ENCODE measurements at regions of chr4 and their contacts with region 1.

Region 1: GRCh38 chr4:26319467-26319948 is 1.3 kb upstream of the RBPJ start:
- DNase-seq: peak; percentile 97 to 99 (median 98)
- H3K4me3 ChIP-seq: peak overlapping the region; percentile 78 to 96 (median 81)
- H3K4me3 Mint-ChIP-seq: peak overlapping the region; percentile 92 to 96
- H3K27ac ChIP-seq: peak overlapping the region; percentile 98 to 99
- H3K27ac Mint-ChIP-seq: peak overlapping the region; percentile 97 to 99 (median 99)
- H3K4me1 ChIP-seq: peaks cover 39 to 44% of the 10 kb centered on the region in 2 donors
- H3K4me1 Mint-ChIP-seq: peaks cover 35% of the 10 kb centered on the region
- H3K27me3 ChIP-seq: no peaks in the 10 kb centered on the region
- H3K27me3 Mint-ChIP-seq: peaks cover 0 to 4% (median 3%) of the 10 kb centered on the region in 3 donors
- CTCF ChIP-seq: no peak

Region 2: DNA sequence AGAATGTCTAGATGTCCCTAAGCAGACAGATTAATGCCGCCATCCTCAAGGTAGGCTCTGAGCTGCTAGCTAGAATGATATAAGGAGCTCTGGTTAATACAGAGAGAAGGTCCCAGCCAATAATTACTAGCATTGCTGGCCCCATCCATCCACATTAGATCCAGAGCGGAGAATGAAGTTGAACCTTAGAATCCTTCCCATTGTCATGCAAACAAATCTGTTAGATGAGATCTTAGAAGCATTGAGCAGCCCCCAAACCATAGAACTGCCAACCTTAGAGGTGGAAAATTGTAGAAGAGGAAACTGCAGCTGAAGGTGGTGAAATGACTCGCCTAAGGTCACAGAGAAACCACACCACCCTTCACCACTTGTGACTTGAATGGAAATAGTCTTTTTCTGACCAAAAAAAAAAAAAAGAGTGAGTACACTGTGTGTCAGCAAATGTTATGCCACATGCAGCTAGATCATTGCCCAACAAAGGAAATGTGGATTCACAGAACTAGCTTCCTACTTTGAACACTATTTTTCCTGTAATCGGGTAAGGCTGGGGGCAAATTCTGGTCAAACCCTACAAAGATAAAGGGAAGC is 243.4 kb before region 1 on chr4:
- intact Hi-C with region 1: loop called (anchors 1 to 10 kb)
- DNase-seq: peak; percentile 92 to 97 (median 95)
- H3K4me3 ChIP-seq: peak overlapping the region in 1 of 3 experiments; percentile 15
- H3K4me3 Mint-ChIP-seq: peak overlapping the region; percentile 6 to 56
- H3K27ac ChIP-seq: peak overlapping the region; percentile 71 to 95
- H3K27ac Mint-ChIP-seq: peak overlapping the region; percentile 98 to 99 (median 98)
- H3K4me1 ChIP-seq: peaks cover 56% of the 10 kb centered on the region in 2 donors
- H3K4me1 Mint-ChIP-seq: peaks cover 65% of the 10 kb centered on the region
- H3K27me3 ChIP-seq: peaks cover 0 to 6% of the 10 kb centered on the region in 2 donors
- H3K27me3 Mint-ChIP-seq: peaks cover 5 to 22% (median 7%) of the 10 kb centered on the region in 3 donors
- CTCF ChIP-seq: no peak

Region 3: DNA sequence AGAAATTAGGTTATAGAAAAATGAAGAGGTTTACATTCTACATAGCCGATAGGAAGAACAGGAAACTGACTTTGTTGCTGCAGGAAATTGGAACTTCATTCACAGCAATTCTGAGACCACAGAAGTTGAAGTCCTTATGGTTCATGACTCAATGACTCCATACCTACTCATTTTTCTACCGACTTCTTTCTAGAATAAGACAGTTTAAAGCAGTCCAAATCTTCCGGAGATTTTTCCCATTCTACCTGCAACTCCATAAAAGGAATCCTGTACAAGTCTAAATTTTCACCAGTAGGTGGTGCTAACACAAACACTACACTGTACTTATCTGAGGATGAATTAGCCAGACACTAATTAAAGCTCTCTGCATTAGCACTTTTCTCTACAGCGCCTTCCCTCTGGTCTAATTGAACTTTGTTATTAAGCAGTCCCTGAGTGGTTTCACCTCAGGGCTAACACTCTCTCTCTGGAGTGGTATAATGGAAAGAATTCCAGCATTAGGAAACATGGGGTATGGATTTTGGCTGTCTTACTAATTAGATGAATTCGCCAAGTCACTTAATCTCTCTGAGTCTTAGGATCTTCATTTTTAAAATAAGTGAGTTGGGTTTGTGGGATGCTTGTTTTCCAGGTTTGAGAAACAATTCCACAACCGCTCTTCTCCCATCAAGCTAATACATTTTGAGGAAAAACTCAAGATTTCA is 237.6 kb before region 1 on chr4:
- intact Hi-C with region 1: loop called in 1 of 2 experiments (anchors 10 kb)
- DNase-seq: peak in 2 of 3 donors; percentile 47 to 74
- H3K4me3 ChIP-seq: no peak overlapping the region
- H3K4me3 Mint-ChIP-seq: no peak overlapping the region
- H3K27ac ChIP-seq: no peak overlapping the region
- H3K27ac Mint-ChIP-seq: peak overlapping the region in 1 of 7 donors; percentile 31
- H3K4me1 ChIP-seq: peaks cover 32 to 34% of the 10 kb centered on the region in 2 donors
- H3K4me1 Mint-ChIP-seq: peaks cover 38% of the 10 kb centered on the region
- H3K27me3 ChIP-seq: peaks cover 5 to 6% of the 10 kb centered on the region in 2 donors
- H3K27me3 Mint-ChIP-seq: peaks cover 15 to 19% (median 19%) of the 10 kb centered on the region in 3 donors
- CTCF ChIP-seq: peak; percentile 83

Region 4: GRCh38 chr4:26217961-26218676 is 101.4 kb before region 1 on chr4:
- intact Hi-C with region 1: loop called (anchors 5 to 10 kb)
- DNase-seq: peak; percentile 93 to 95 (median 95)
- H3K4me3 ChIP-seq: peak overlapping the region in 1 of 3 experiments; percentile 48
- H3K4me3 Mint-ChIP-seq: peak overlapping the region; percentile 70 to 82
- H3K27ac ChIP-seq: peak overlapping the region; percentile 96 to 99
- H3K27ac Mint-ChIP-seq: peak overlapping the region; percentile 99 to 100 (median 99)
- H3K4me1 ChIP-seq: peaks cover 28 to 31% of the 10 kb centered on the region in 2 donors
- H3K4me1 Mint-ChIP-seq: peaks cover 47% of the 10 kb centered on the region
- H3K27me3 ChIP-seq: no peaks in the 10 kb centered on the region
- H3K27me3 Mint-ChIP-seq: peaks cover 3 to 13% (median 12%) of the 10 kb centered on the region in 3 donors
- CTCF ChIP-seq: no peak

Region 5: GRCh38 chr4:26273616-26273980 is 45.9 kb before region 1 on chr4:
- intact Hi-C with region 1: loop called in 1 of 2 experiments (anchors 5 kb)
- DNase-seq: peak in 2 of 3 donors; percentile 67 to 79
- H3K4me3 ChIP-seq: peak overlapping the region; percentile 25 to 71 (median 29)
- H3K4me3 Mint-ChIP-seq: peak overlapping the region; percentile 56 to 78
- H3K27ac ChIP-seq: peak overlapping the region; percentile 88 to 91
- H3K27ac Mint-ChIP-seq: peak overlapping the region; percentile 87 to 97 (median 95)
- H3K4me1 ChIP-seq: peaks cover 80 to 87% of the 10 kb centered on the region in 2 donors
- H3K4me1 Mint-ChIP-seq: peaks cover 71% of the 10 kb centered on the region
- H3K27me3 ChIP-seq: no peaks in the 10 kb centered on the region
- H3K27me3 Mint-ChIP-seq: peaks cover 0 to 3% (median 2%) of the 10 kb centered on the region in 3 donors
- CTCF ChIP-seq: no peak

Region 6: GRCh38 chr4:26288355-26288909 is 31.1 kb before region 1 on chr4:
- intact Hi-C with region 1: loop called (anchors 1 to 2 kb)
- DNase-seq: peak; percentile 93 to 97 (median 97)
- H3K4me3 ChIP-seq: peak overlapping the region; percentile 8 to 43 (median 36)
- H3K4me3 Mint-ChIP-seq: peak overlapping the region; percentile 42 to 76
- H3K27ac ChIP-seq: peak overlapping the region; percentile 99
- H3K27ac Mint-ChIP-seq: peak overlapping the region; percentile 98 to 100 (median 99)
- H3K4me1 ChIP-seq: peaks cover 41 to 45% of the 10 kb centered on the region in 2 donors
- H3K4me1 Mint-ChIP-seq: peaks cover 30% of the 10 kb centered on the region
- H3K27me3 ChIP-seq: no peaks in the 10 kb centered on the region
- H3K27me3 Mint-ChIP-seq: peaks cover 0 to 2% (median 0%) of the 10 kb centered on the region in 3 donors
- CTCF ChIP-seq: no peak

Region 7: GRCh38 chr4:26410385-26411293 is 91.1 kb after region 1 on chr4:
- intact Hi-C with region 1: no loop called
- DNase-seq: peak; percentile 25 to 62 (median 31)
- H3K4me3 ChIP-seq: no peak overlapping the region
- H3K4me3 Mint-ChIP-seq: no peak overlapping the region
- H3K27ac ChIP-seq: no peak overlapping the region
- H3K27ac Mint-ChIP-seq: peak overlapping the region in 1 of 7 donors; percentile 76
- H3K4me1 ChIP-seq: peaks cover 4 to 12% of the 10 kb centered on the region in 2 donors
- H3K4me1 Mint-ChIP-seq: peaks cover 7% of the 10 kb centered on the region
- H3K27me3 ChIP-seq: no peaks in the 10 kb centered on the region
- H3K27me3 Mint-ChIP-seq: no peaks in the 10 kb centered on the region
- CTCF ChIP-seq: peak; percentile 85